MCF 10A (cell line): ENCODE measurements at regions of chr1 and their contacts with region 1.

Region 1: GRCh38 chr1:56584910-56585528 is 5.7 kb upstream of the PLPP3 start:
- DNase-seq: peak; percentile 71
- H3K4me3 Mint-ChIP-seq: no peak overlapping the region
- H3K27ac Mint-ChIP-seq: no peak overlapping the region
- H3K4me1 Mint-ChIP-seq: no peaks in the 10 kb centered on the region
- H3K27me3 Mint-ChIP-seq: no peaks in the 10 kb centered on the region
- CTCF ChIP-seq: peak; percentile 74

Region 2: DNA sequence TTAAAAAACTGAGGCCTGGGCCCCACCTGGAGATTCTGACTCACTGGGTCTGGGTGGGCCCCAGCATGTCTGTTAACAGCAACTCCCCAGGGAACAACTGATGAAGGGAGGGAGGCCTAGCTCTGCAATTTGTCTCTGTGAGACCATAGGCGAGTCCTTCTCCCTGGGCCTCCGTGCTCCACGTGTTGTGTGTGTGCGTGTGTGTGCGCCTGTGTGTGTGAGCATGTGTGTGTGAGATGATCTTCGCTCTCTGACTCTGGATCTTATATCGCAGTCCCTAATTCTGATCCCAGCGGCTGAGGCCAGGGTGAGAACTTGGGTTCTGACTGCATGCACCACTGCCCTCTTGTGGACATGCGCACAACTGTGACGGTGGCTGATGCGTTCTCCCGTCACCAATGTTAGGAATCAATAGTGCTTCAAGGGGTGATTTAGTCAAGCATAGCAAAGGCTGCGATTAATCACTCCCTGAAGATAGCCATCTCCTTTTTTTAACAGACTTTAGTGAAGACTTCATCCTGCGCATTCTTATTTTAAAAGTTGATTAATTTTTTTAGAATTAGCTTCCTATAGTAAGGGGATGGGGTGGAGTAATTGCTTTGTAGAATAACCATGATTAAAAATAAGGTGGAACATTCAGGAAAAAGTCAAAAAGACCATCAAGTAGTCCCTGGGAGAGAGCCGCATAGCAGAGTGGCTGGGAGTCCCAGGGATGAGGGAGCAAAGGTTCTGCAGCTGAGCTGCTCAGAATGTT is 1307.5 kb before region 1 on chr1:
- CTCF ChIA-PET with region 1: interaction called, 27 read pairs
- POLR2A ChIA-PET with region 1: interaction called, 3 read pairs
- intact Hi-C with region 1: no loop called
- DNase-seq: peak; percentile 79
- H3K4me3 Mint-ChIP-seq: no peak overlapping the region
- H3K27ac Mint-ChIP-seq: no peak overlapping the region
- H3K4me1 Mint-ChIP-seq: peaks cover 6% of the 10 kb centered on the region
- H3K27me3 Mint-ChIP-seq: no peaks in the 10 kb centered on the region
- CTCF ChIP-seq: peak; percentile 78

Region 3: DNA sequence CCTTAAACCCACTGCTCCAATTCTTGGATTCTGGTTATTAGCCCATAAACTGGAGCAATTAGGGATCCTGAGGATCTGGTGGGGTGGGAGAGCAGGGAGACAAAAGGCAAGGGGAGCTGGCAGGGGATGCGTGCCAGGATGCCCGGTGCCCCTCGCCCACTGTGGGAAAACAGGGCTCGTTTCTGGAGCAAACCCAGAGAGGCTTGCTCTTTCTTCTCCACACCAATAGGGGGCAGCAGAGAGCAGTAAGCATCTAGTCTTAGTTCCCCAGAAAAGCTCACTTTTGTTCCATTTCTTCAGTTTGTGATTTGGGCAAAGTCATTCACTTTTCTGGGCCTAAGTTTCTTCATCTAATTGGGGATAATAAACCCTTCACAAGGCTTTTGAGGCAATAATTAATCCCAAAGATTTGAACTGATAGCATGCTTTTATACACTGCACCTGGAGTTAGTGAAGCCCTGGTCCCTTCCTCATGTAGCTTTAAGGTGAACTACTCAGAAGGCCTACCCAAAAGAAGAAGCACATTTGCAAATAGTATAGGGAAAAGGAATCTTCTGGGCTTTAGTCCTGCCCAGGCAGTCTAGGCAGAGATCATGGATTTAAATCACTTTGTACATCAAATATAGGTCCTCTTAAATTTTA is 1209.3 kb before region 1 on chr1:
- CTCF ChIA-PET with region 1: interaction called, 28 read pairs
- POLR2A ChIA-PET with region 1: no interaction called
- intact Hi-C with region 1: loop called (anchors 1 kb)
- DNase-seq: peak; percentile 72
- H3K4me3 Mint-ChIP-seq: no peak overlapping the region
- H3K27ac Mint-ChIP-seq: no peak overlapping the region
- H3K4me1 Mint-ChIP-seq: peaks cover 14% of the 10 kb centered on the region
- H3K27me3 Mint-ChIP-seq: no peaks in the 10 kb centered on the region
- CTCF ChIP-seq: peak; percentile 85

Region 4: GRCh38 chr1:55506686-55507577 is 1078.1 kb before region 1 on chr1:
- CTCF ChIA-PET with region 1: no interaction called
- POLR2A ChIA-PET with region 1: interaction called, 3 read pairs
- intact Hi-C with region 1: loop called (anchors 5 kb)
- DNase-seq: peak; percentile 34
- H3K4me3 Mint-ChIP-seq: no peak overlapping the region
- H3K27ac Mint-ChIP-seq: peak overlapping the region; percentile 28
- H3K4me1 Mint-ChIP-seq: peaks cover 14% of the 10 kb centered on the region
- H3K27me3 Mint-ChIP-seq: no peaks in the 10 kb centered on the region
- CTCF ChIP-seq: no peak

Region 5: GRCh38 chr1:56709269-56709880 is 124.4 kb after region 1 on chr1:
- CTCF ChIA-PET with region 1: interaction called, 18 read pairs
- POLR2A ChIA-PET with region 1: no interaction called
- intact Hi-C with region 1: loop called (anchors 2 kb)
- DNase-seq: peak; percentile 69
- H3K4me3 Mint-ChIP-seq: no peak overlapping the region
- H3K27ac Mint-ChIP-seq: no peak overlapping the region
- H3K4me1 Mint-ChIP-seq: peaks cover 6% of the 10 kb centered on the region
- H3K27me3 Mint-ChIP-seq: no peaks in the 10 kb centered on the region
- CTCF ChIP-seq: peak; percentile 66